H1 (cell line): ENCODE measurements at regions of chr18 and their contacts with region 1.

Region 1: GRCh38 chr18:10519999-10520935 is 5.6 kb upstream of the NAPG start:
- DNase-seq: peak; percentile 58 to 68
- H3K4me3 ChIP-seq: no peak overlapping the region
- H3K27ac ChIP-seq: no peak overlapping the region
- H3K4me1 ChIP-seq: no peaks in the 10 kb centered on the region
- H3K27me3 ChIP-seq: no peaks in the 10 kb centered on the region
- CTCF ChIP-seq: peak; percentile 74 to 84 (median 84)
- EP300 ChIP-seq: no peak
- POLR2A ChIP-seq: no peak
- RAD21 ChIP-seq: peak; percentile 97 to 98

Region 2: GRCh38 chr18:9971313-9971920 is 548.9 kb before region 1 on chr18:
- CTCF ChIA-PET with region 1: interaction called, 74 read pairs
- POLR2A ChIA-PET with region 1: no interaction called
- DNase-seq: peak; percentile 33 to 89
- H3K4me3 ChIP-seq: no peak overlapping the region
- H3K27ac ChIP-seq: no peak overlapping the region
- H3K4me1 ChIP-seq: peaks cover 0 to 3% (median 0%) of the 10 kb centered on the region in 4 experiments; a peak in 2 of 7 replicates
- H3K27me3 ChIP-seq: no peaks in the 10 kb centered on the region
- CTCF ChIP-seq: peak; percentile 9 to 77 (median 71)
- EP300 ChIP-seq: no peak
- POLR2A ChIP-seq: no peak
- RAD21 ChIP-seq: peak; percentile 98 to 99

Region 3: DNA sequence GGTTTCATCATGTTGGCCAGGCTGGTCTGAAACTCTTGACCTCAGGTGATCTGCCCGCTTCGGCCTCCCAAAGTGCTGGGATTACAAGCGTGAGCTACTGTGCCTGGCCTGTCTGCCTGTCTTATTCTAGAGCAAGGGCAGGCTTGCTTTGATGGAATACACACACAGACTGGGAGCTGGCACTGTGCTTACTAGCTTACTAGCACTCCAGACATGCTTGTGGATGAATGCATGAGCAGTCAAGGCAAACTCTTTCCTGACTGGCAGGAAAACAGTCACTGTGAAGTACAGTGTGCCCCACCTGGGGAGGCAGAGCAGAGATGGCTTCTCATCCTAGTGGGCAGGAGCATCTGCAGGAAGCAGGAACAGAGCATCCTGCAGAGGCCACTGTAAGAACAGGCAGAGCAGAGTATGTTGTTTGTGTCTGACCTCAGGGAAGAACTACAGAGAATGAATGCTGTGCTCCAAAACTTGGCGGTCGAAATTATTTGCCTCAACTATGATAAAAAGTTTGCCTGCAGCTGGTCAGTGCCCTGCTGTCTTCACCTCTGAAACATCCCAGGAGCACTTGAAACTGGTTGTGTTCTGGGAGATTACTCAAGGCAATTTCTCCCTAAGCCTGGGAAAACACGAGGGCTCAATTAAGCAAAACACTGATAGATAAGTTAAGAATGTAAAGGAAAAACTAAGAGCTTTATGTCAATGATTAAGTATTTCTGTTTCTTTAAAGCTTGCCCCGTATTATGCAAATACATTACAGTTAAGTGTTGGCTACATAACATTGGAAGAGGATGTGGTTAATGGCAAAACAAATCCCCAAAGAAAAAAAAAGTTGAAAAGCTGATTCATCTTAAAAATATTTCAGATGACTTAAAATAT is 504.1 kb before region 1 on chr18:
- CTCF ChIA-PET with region 1: interaction called, 13 read pairs
- POLR2A ChIA-PET with region 1: no interaction called
- DNase-seq: no peak
- H3K4me3 ChIP-seq: no peak overlapping the region
- H3K27ac ChIP-seq: no peak overlapping the region
- H3K4me1 ChIP-seq: no peaks in the 10 kb centered on the region
- H3K27me3 ChIP-seq: 0 out of 7 replicates have a peak, but pooled peaks cover 0 to 2% (median 0%) of the 10 kb centered on the region in 4 experiments
- CTCF ChIP-seq: peak; percentile 20 to 40 (median 30); a peak in 2 of 4 replicates
- EP300 ChIP-seq: no peak
- POLR2A ChIP-seq: no peak
- RAD21 ChIP-seq: peak; percentile 52 to 64

Region 4: GRCh38 chr18:10032331-10033015 is 487.8 kb before region 1 on chr18:
- CTCF ChIA-PET with region 1: interaction called, 11 read pairs
- POLR2A ChIA-PET with region 1: no interaction called
- DNase-seq: peak; percentile 44 to 83
- H3K4me3 ChIP-seq: peak overlapping the region in 3 of 4 experiments; percentile 11 to 50 (median 14); a peak in 5 of 8 replicates
- H3K27ac ChIP-seq: no peak overlapping the region
- H3K4me1 ChIP-seq: peaks cover 0 to 7% (median 5%) of the 10 kb centered on the region in 4 experiments; a peak in 5 of 7 replicates
- H3K27me3 ChIP-seq: peaks cover 0 to 2% (median 0%) of the 10 kb centered on the region in 4 experiments; a peak in 2 of 7 replicates
- CTCF ChIP-seq: peak; percentile 66 to 87 (median 79)
- EP300 ChIP-seq: no peak
- POLR2A ChIP-seq: no peak
- RAD21 ChIP-seq: peak; percentile 87 to 92

Region 5: GRCh38 chr18:10405816-10406663 is 114.2 kb before region 1 on chr18:
- CTCF ChIA-PET with region 1: no interaction called
- POLR2A ChIA-PET with region 1: no interaction called
- DNase-seq: no peak
- H3K4me3 ChIP-seq: no peak overlapping the region; a peak in 2 of 8 replicates
- H3K27ac ChIP-seq: no peak overlapping the region
- H3K4me1 ChIP-seq: peaks cover 2 to 8% (median 5%) of the 10 kb centered on the region in 4 experiments; a peak in 5 of 7 replicates
- H3K27me3 ChIP-seq: no peaks in the 10 kb centered on the region
- CTCF ChIP-seq: no peak
- EP300 ChIP-seq: no peak
- POLR2A ChIP-seq: no peak
- RAD21 ChIP-seq: no peak

Region 6: GRCh38 chr18:10490401-10491165 is 29.7 kb before region 1 on chr18:
- CTCF ChIA-PET with region 1: interaction called, 23 read pairs
- POLR2A ChIA-PET with region 1: no interaction called
- DNase-seq: peak in 1 of 2 experiments; percentile 57
- H3K4me3 ChIP-seq: no peak overlapping the region
- H3K27ac ChIP-seq: no peak overlapping the region
- H3K4me1 ChIP-seq: no peaks in the 10 kb centered on the region; a peak in 1 of 7 replicates
- H3K27me3 ChIP-seq: no peaks in the 10 kb centered on the region
- CTCF ChIP-seq: peak; percentile 72 to 81 (median 74)
- EP300 ChIP-seq: no peak
- POLR2A ChIP-seq: no peak
- RAD21 ChIP-seq: peak; percentile 56 to 68; a peak in 3 of 4 replicates

Region 7: DNA sequence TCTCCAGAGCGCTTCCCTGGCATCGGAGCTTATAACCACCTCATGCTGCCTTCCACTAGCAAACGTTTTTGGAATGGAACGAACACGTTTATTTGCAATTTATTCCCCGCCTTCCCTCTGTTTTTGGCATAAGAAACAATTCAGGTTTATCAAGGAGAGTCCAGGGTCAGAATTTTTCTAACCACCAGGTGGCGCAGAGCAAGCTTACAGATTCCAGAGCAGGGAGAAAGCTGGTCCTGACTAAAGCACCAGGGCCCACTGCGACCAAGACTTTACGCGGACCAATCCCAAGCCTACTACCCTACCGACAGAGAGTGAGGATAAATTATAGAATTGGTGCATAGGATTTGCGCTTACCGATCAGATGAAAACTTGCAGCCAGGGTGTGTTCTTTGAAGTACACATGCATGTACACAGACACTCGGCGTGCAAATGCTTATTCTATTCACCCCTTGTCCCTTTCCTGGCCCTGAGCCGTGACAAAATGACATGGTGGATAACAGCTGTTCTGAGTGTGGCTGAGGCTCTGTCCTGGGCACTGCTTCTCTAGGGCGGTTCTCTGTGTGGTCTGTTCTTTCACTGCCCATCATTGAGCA is 40.3 kb after region 1 on chr18:
- CTCF ChIA-PET with region 1: no interaction called
- POLR2A ChIA-PET with region 1: no interaction called
- DNase-seq: peak; percentile 49 to 91
- H3K4me3 ChIP-seq: 0 out of 8 replicates have a peak overlapping the region, but pooled peaks of 1 of the 4 experiments have one; percentile 26
- H3K27ac ChIP-seq: no peak overlapping the region
- H3K4me1 ChIP-seq: peaks cover 0 to 6% (median 3%) of the 10 kb centered on the region in 4 experiments; a peak in 3 of 7 replicates
- H3K27me3 ChIP-seq: no peaks in the 10 kb centered on the region
- CTCF ChIP-seq: peak; percentile 16 to 79 (median 70)
- EP300 ChIP-seq: no peak
- POLR2A ChIP-seq: no peak
- RAD21 ChIP-seq: peak; percentile 78 to 83